GM10248 (cell line): ENCODE measurements at regions of chr11 and their contacts with region 1.

Region 1: DNA sequence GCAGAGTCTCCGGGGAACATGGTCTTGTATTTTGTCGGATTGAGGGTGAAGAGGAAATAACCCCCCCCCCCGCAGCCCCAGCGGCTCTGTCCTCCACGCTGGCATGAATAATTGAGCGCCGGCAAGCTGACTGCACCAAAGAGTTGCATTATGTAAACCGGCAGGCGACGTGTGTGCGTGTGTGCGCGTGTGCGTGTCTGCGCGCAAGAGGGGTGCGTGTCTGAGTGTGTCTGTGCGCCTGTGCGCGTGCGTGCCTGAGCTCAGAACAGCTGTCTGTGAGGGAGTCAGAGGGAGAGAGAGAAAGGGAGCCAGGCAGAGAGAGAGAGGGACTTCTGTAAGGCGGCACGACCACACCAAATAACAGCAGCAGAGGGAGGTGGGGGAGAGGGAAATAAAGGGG is 94.4 kb downstream of the SCN3B start:
- DNase-seq: peak; percentile 54
- CTCF ChIP-seq: no peak

Region 2: GRCh38 chr11:123454060-123454651 is 105.8 kb before region 1 on chr11:
- CTCF ChIA-PET with region 1: no interaction called
- POLR2A ChIA-PET with region 1: no interaction called
- DNase-seq: no peak
- CTCF ChIP-seq: no peak

Region 3: DNA sequence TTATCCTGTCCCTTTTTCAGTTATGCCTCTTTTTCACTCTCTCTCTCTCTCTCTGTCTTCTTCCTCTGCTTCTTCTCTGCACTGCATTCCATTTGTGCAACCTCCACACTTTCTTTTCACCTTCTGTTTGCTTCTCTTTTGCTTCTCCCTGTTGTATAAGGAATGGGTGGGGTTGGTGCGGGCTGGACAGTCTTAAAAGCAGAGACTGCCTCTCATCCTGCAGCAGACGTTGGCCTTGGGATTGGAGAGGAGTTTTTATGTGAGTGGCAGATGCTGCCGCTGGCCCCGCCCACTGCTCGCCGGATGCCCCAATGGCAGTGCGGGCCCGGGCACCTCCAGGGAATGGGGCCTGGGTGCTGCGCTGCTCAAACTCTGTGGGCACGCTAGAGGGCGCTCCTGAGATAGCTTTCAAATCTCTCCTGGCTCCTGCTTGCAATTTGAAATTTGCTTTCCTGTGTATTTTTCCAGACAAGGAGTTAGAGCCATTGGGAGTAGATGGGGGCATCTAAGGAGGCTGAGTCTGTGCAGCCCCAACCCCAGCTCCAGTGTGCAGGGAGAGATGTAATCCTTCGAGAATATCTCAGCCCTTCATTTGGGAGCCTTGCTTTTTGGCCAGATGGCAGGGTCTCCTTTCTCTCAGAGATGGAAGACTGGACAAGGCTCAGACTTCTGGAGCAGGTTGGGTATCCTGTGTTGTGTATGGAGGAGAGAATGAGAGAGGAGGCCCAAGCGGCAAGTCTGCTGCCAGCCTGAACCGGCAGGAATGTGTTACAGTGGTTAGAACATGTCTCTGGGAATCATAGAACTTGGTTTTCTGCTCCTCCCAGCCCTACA is 48.8 kb before region 1 on chr11:
- CTCF ChIA-PET with region 1: interaction called, 10 read pairs
- POLR2A ChIA-PET with region 1: no interaction called
- DNase-seq: peak; percentile 79
- CTCF ChIP-seq: peak; percentile 83

Region 4: DNA sequence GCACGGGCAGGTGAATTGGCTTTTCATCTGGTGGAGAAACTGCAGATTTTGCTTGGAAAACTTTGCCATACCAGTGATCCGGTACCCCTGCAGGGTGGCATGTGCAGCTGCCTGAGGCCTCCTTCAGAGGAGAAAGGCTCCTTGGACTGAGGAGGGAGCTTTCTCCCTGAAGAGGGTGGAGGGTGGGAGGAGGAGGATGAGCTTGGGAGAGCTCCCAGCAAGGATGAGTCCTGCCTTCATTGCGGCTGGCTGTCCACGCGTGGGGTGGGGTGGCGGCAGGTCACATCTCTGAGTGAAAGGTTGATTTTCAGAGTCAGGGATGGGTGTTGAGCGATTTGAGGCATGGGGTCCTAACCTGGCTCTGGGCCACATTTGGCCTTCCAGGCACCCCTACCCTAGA is 33.1 kb before region 1 on chr11:
- CTCF ChIA-PET with region 1: interaction called, 10 read pairs
- POLR2A ChIA-PET with region 1: no interaction called
- DNase-seq: no peak
- CTCF ChIP-seq: no peak

Region 5: DNA sequence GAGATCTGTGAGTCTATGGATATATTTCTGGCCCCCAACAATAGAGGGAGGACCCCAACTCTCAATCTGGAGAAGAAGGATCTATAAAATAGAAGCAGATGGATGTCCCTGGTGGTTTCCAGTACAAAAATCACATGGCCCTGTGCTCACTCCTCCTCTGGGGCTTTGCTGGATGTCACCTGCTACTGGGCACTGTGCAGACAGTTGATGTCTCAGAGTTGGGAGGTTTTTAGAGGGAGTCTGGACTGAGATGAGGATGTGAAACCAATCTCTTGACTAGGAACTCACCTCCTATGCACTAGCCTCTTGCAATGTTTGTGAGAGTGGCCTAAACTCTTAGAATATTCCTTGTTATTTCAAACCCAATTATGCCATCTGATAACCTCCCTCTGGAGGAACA is 12.8 kb before region 1 on chr11:
- CTCF ChIA-PET with region 1: interaction called, 26 read pairs
- POLR2A ChIA-PET with region 1: interaction called, 3 read pairs
- DNase-seq: peak; percentile 69
- CTCF ChIP-seq: no peak

Region 6: DNA sequence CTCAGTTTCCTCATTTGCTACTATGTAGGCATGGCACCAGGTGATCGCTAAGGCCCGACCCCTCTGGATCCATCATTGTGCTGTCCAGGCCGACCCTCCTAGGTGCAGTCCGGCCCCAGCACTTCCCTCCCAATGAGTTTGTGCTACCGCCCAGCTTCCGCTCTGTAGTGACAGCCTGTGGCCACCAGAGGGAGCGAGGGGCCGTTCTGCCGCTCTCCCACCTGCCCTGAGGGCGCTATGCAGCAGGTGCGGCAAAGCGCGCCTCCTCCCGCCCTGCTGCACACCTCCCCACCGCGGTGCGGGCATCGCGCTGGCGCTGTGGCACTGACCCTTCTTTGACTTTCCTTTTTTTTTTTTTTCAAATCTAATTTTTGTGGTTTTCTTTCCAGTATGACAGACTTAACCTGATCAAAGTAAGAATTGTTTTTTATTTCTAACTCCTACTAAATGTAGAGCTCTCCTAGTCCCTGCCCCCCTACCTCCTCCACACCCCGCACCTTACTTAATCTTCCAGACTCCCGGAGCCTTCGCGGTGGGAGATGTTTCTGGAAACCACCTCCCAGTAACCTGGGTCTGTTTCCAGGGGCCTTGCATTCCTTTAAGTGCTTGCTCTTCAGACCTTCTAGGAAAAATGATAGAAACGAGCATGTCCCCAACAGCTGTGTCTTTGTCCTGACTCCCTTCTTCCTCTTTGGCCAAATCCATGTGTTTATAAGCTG is 20.7 kb after region 1 on chr11:
- CTCF ChIA-PET with region 1: interaction called, 41 read pairs
- POLR2A ChIA-PET with region 1: no interaction called
- DNase-seq: peak; percentile 88
- CTCF ChIP-seq: peak; percentile 97